ENCODE measurements at regions of chr3 and their contacts with region 1.

Region 1: DNA sequence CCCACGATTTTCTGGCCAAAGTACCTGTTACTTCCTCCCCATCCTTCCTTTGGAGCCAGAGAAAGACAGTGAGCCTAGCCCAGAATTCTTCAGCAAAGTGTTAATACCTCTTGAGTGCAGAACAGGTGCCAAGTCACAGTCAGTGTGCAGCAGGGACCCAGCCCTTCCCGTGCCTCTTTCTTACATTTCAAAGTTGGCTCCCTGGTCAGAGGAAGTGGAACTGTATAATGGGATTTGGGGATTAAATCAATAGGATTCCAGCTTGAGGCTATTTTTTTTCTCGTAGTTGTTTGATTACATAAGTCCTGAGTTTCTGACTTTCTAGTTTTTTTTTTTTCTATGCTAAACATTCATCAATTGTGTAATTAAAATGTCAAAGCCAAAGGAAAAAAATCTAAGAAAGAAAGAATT is 52.6 kb upstream of the ABHD10 start:
- DNase-seq: no peak
- ATAC-seq: no peak
- H3K4me3 ChIP-seq: no peak overlapping the region
- H3K4me3 Mint-ChIP-seq: no peak overlapping the region
- H3K27ac ChIP-seq: no peak overlapping the region
- H3K27ac Mint-ChIP-seq: no peak overlapping the region
- H3K4me1 ChIP-seq: no peaks in the 10 kb centered on the region
- H3K4me1 Mint-ChIP-seq: no peaks in the 10 kb centered on the region
- H3K27me3 ChIP-seq: no peaks in the 10 kb centered on the region
- H3K27me3 Mint-ChIP-seq: peaks cover 0 to 2% of the 10 kb centered on the region in 2 donors

Region 2: DNA sequence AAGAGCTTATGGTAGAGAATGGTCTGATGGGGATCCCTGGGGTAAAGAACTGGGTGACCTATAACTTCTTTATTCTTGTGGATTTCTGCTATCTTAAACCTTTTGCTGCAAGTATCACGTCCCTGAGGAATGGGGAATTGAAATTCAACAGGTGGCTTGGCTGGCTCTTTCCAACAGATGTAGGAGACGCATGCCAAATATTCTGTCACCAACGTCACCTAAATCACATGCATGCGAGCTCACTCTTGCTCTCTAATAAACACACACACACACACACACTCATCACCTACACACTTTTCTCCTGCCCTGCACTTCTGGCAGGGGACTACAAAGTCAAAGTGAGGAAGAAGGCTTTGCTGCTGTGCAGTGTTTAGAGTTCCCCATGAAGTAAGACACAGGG is 1000.5 kb before region 1 on chr3:
- CTCF ChIA-PET with region 1: interaction called in 1 of 2 experiments, 10 read pairs
- POLR2A ChIA-PET with region 1: no interaction called
- DNase-seq: no peak
- ATAC-seq: no peak
- H3K4me3 ChIP-seq: no peak overlapping the region
- H3K4me3 Mint-ChIP-seq: no peak overlapping the region
- H3K27ac ChIP-seq: no peak overlapping the region
- H3K27ac Mint-ChIP-seq: no peak overlapping the region
- H3K4me1 ChIP-seq: no peaks in the 10 kb centered on the region
- H3K4me1 Mint-ChIP-seq: no peaks in the 10 kb centered on the region
- H3K27me3 ChIP-seq: no peaks in the 10 kb centered on the region
- H3K27me3 Mint-ChIP-seq: peaks cover 7 to 14% of the 10 kb centered on the region in 2 donors

Region 3: DNA sequence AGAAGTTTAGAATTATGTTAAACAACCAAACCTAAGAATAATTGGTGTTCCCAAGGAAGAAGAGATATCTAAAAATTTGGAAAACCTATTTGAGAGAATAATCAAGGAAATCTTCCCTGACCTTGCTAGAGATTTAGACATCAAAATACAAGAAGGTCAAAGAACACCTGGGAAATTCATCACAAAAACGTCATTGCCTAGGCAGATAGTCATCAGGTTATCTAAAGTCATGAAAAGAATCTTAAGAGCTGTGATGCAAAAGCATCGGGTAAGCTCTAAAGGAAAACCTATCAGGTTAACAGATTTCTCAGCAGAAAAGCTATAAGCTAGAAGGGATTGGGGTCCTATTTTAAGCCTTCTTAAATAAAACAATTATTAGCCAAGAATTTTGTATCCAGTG is 518.3 kb before region 1 on chr3:
- CTCF ChIA-PET with region 1: no interaction called
- POLR2A ChIA-PET with region 1: no interaction called
- DNase-seq: no peak
- ATAC-seq: no peak
- H3K4me3 ChIP-seq: no peak overlapping the region
- H3K4me3 Mint-ChIP-seq: no peak overlapping the region
- H3K27ac ChIP-seq: no peak overlapping the region
- H3K27ac Mint-ChIP-seq: no peak overlapping the region
- H3K4me1 ChIP-seq: no peaks in the 10 kb centered on the region
- H3K4me1 Mint-ChIP-seq: no peaks in the 10 kb centered on the region
- H3K27me3 ChIP-seq: no peaks in the 10 kb centered on the region
- H3K27me3 Mint-ChIP-seq: peaks cover 0 to 8% of the 10 kb centered on the region in 2 donors

Region 4: DNA sequence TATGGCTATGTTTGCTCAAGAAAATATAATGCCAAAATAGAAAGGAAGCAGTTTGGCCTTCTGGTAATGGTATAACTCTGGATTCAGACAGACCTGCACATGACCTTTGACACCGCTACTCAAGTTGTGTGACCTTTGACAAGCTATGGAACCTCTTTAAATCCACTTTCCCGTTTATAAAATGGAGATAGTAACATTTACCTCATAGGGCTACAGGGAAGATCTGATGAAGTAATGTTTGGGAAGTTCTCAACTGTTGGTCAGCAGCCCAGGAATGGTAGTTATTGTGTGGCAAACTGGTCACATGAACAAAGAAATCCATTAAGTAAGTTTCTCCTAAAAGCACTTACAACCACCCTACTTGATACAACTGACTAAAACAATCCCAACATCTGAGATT is 162.3 kb before region 1 on chr3:
- CTCF ChIA-PET with region 1: interaction called in 1 of 2 experiments, 12 read pairs
- POLR2A ChIA-PET with region 1: no interaction called
- DNase-seq: no peak
- ATAC-seq: no peak
- H3K4me3 ChIP-seq: no peak overlapping the region
- H3K4me3 Mint-ChIP-seq: no peak overlapping the region
- H3K27ac ChIP-seq: no peak overlapping the region
- H3K27ac Mint-ChIP-seq: no peak overlapping the region
- H3K4me1 ChIP-seq: no peaks in the 10 kb centered on the region
- H3K4me1 Mint-ChIP-seq: no peaks in the 10 kb centered on the region
- H3K27me3 ChIP-seq: no peaks in the 10 kb centered on the region
- H3K27me3 Mint-ChIP-seq: no peaks in the 10 kb centered on the region